ENCODE measurements at regions of chr2 and their contacts with region 1.

Region 1: DNA sequence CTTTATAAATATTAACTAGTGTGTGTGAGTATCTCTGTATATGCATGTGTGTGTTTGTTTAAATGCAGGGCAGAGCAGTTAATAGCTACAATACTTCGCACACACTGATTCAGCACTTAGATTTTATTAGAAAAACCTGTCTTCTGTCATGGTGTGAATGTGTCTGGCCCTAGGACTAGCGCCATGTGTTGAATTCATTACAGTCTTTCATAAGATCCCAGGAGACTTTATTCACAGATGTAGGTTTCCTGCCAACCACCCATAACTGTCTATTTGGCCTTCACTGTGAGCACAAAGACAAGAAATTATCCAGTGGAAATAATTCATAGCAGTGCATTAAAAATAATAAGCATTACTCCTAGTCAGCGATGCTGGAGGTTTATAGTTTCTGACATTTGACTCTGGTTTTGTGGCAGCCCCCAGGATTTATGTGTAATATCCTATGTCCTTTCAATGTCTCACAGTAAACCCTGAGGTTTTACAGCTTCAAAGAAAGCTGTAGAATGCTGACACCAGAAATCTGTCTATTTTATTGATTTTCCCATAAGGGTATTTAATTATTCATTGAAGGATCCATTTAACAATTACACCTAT is 93.9 kb downstream of the ZNF804A start:
- DNase-seq: peak; percentile 95
- H3K4me3 ChIP-seq: no peak overlapping the region
- H3K27ac ChIP-seq: peak overlapping the region; percentile 64
- H3K4me1 ChIP-seq: peaks cover 28% of the 10 kb centered on the region
- H3K27me3 ChIP-seq: no peaks in the 10 kb centered on the region
- CTCF ChIP-seq: no peak

Region 2: GRCh38 chr2:184402381-184402780 is 289.9 kb before region 1 on chr2:
- CTCF ChIA-PET with region 1: no interaction called
- POLR2A ChIA-PET with region 1: no interaction called
- intact Hi-C with region 1: no loop called
- DNase-seq: no peak
- H3K4me3 ChIP-seq: no peak overlapping the region
- H3K27ac ChIP-seq: no peak overlapping the region
- H3K4me1 ChIP-seq: no peaks in the 10 kb centered on the region
- H3K27me3 ChIP-seq: no peaks in the 10 kb centered on the region
- CTCF ChIP-seq: no peak

Region 3: DNA sequence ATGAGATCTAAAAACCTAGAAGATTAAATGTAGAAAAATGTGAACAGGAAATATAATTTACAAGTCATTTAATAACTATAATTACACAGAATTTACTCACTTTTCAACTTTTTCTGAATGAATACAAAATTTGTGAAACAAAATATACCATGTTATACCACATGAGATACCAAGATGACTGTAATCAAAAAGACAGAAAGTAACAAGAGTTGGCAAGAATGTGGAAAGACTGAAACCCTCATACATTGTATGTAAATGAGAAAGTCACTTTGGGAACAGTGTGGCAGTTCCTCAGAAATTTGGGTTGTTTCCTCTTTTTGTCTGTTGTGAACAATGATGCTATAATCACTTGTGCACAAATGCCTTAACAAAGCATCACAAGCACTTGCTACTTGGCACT is 239.3 kb before region 1 on chr2:
- CTCF ChIA-PET with region 1: no interaction called
- POLR2A ChIA-PET with region 1: no interaction called
- intact Hi-C with region 1: no loop called
- DNase-seq: no peak
- H3K4me3 ChIP-seq: no peak overlapping the region
- H3K27ac ChIP-seq: no peak overlapping the region
- H3K4me1 ChIP-seq: no peaks in the 10 kb centered on the region
- H3K27me3 ChIP-seq: no peaks in the 10 kb centered on the region
- CTCF ChIP-seq: no peak

Region 4: GRCh38 chr2:184562532-184562931 is 129.7 kb before region 1 on chr2:
- CTCF ChIA-PET with region 1: no interaction called
- POLR2A ChIA-PET with region 1: no interaction called
- intact Hi-C with region 1: no loop called
- DNase-seq: no peak
- H3K4me3 ChIP-seq: no peak overlapping the region
- H3K27ac ChIP-seq: no peak overlapping the region
- H3K4me1 ChIP-seq: no peaks in the 10 kb centered on the region
- H3K27me3 ChIP-seq: no peaks in the 10 kb centered on the region
- CTCF ChIP-seq: no peak

Region 5: GRCh38 chr2:184628051-184628450 is 64.2 kb before region 1 on chr2:
- CTCF ChIA-PET with region 1: interaction called, 25 read pairs
- POLR2A ChIA-PET with region 1: no interaction called
- intact Hi-C with region 1: no loop called
- DNase-seq: no peak
- H3K4me3 ChIP-seq: no peak overlapping the region
- H3K27ac ChIP-seq: no peak overlapping the region
- H3K4me1 ChIP-seq: no peaks in the 10 kb centered on the region
- H3K27me3 ChIP-seq: no peaks in the 10 kb centered on the region
- CTCF ChIP-seq: no peak

Region 6: GRCh38 chr2:184646177-184646576 is 46.1 kb before region 1 on chr2:
- CTCF ChIA-PET with region 1: no interaction called
- POLR2A ChIA-PET with region 1: no interaction called
- intact Hi-C with region 1: loop called (anchors 1 kb)
- DNase-seq: no peak
- H3K4me3 ChIP-seq: no peak overlapping the region
- H3K27ac ChIP-seq: no peak overlapping the region
- H3K4me1 ChIP-seq: peaks cover 9% of the 10 kb centered on the region
- H3K27me3 ChIP-seq: no peaks in the 10 kb centered on the region
- CTCF ChIP-seq: no peak

Region 7: DNA sequence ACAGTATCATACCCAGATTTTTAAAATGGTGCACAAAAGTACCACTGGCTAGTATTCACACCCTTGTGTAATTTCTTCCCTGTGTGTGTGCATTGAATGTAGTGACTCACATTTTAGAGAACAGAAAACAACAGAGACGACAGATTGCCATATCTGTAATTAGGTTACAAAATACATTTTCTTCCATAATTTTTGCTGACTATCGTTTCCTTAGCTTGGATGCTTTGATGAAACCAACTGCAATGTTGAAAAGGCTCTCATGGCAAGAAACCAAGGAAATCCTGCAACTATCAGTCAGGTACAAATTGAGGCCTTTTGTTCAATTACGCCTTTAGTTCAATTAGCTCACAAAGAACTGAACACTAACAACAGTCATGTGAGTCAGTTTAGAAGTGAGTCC is 390.5 kb after region 1 on chr2:
- CTCF ChIA-PET with region 1: no interaction called
- POLR2A ChIA-PET with region 1: no interaction called
- intact Hi-C with region 1: no loop called
- DNase-seq: no peak
- H3K4me3 ChIP-seq: no peak overlapping the region
- H3K27ac ChIP-seq: no peak overlapping the region
- H3K4me1 ChIP-seq: no peaks in the 10 kb centered on the region
- H3K27me3 ChIP-seq: no peaks in the 10 kb centered on the region
- CTCF ChIP-seq: no peak